Motor neuron (in vitro differentiated cells): ENCODE measurements at regions of chr4 and their contacts with region 1.

Region 1: GRCh38 chr4:163048447-163048846 is 118.2 kb downstream of the NAF1 start:
- ATAC-seq: peak in 3 of 8 experiments; percentile 31 to 65 (median 57)
- H3K4me3 ChIP-seq: no peak overlapping the region
- H3K27ac ChIP-seq: no peak overlapping the region
- H3K4me1 ChIP-seq: no peaks in the 10 kb centered on the region

Region 2: DNA sequence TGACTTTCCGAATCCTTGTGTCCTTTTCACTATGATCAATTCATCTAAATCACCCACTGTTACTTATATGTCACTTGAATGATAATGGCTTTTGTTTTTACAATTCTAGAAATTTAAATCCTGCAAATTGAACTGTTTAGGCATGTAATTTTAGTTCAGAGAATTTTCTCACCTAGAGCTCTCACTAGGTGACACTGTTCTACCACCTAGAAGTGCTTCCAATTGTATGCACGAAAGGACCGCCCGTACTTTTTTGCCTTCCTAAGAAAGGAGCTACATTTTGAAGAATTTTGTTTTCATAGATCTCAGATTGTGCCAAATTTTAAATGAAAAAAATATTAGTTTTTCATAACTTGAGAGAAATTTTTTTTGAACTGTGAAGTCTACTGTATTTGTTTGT is 403.1 kb before region 1 on chr4:
- in situ Hi-C with region 1: loop called in 1 of 9 experiments (anchors 25 kb)
- ATAC-seq: peak in 1 of 8 experiments; percentile 47
- H3K4me3 ChIP-seq: no peak overlapping the region
- H3K27ac ChIP-seq: no peak overlapping the region
- H3K4me1 ChIP-seq: no peaks in the 10 kb centered on the region